Activated CD4-positive, alpha-beta T cell treated with anti-CD3 and anti-CD28 coated beads, Interleukin-2, amount 10 ng/mL, durations not matched to agents 24 days and 14 days (primary cell): ENCODE measurements at regions of chr3 and their contacts with region 1.

Region 1: DNA sequence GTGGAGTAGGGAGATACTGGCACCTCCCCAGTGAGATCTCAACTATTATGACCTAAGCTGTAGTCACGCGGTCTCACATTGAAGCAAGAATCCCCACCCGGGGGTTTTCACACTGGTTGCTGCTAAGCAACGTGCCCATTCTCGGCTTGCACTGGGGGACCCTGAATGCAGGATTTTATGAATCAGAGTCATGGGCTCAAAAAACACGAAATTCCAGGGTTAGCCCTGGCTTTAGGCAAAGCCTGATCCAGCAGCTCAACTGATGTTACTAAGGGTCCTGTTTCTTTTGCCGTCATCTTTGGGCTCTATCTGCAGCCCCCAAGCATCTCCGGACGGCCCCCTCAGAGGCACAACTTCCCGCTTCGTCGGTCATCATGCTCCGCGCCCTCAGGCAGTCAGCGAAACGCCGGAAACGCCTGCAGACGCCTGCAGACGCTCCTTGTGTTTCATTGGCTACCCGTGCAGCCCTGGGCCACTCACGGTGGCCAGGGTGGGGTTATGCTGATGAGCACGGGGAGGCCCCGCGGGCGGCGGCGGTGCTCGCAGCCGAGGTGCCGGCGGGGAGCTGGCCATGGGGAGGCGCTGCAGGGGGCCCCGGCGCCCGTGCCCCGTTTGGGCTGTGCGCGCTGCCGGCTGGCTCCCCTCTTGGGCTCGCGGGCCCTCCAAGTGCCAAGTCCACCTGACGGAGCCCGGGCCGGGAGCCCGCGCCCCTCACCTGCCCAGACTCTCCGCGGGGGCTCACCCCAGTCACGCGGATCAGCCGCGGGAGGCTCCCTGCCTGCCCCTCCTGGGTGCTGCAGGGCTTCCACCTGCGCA is 25.8 kb downstream of the EFCC1 start:
- DNase-seq: peak; percentile 98
- H3K4me3 Mint-ChIP-seq: peak overlapping the region; percentile 84
- H3K27ac Mint-ChIP-seq: peak overlapping the region; percentile 92
- H3K4me1 Mint-ChIP-seq: peaks cover 11% of the 10 kb centered on the region
- H3K27me3 Mint-ChIP-seq: peaks cover 9% of the 10 kb centered on the region

Region 2: GRCh38 chr3:128993461-128994173 is 33.3 kb before region 1 on chr3 and contains the start of gene CFAP92:
- intact Hi-C with region 1: loop called (anchors 1 kb)
- DNase-seq: peak; percentile 98
- H3K4me3 Mint-ChIP-seq: peak within 1 kb of the TSS; percentile 74
- H3K27ac Mint-ChIP-seq: no peak within 1 kb of the TSS
- H3K4me1 Mint-ChIP-seq: peaks cover 30% of the 10 kb centered on the region
- H3K27me3 Mint-ChIP-seq: peaks cover 10% of the 10 kb centered on the region
- total RNA-seq, gene CFAP92: 0.17 TPM in 1 of 2 replicates, not detected in the other

Region 3: DNA sequence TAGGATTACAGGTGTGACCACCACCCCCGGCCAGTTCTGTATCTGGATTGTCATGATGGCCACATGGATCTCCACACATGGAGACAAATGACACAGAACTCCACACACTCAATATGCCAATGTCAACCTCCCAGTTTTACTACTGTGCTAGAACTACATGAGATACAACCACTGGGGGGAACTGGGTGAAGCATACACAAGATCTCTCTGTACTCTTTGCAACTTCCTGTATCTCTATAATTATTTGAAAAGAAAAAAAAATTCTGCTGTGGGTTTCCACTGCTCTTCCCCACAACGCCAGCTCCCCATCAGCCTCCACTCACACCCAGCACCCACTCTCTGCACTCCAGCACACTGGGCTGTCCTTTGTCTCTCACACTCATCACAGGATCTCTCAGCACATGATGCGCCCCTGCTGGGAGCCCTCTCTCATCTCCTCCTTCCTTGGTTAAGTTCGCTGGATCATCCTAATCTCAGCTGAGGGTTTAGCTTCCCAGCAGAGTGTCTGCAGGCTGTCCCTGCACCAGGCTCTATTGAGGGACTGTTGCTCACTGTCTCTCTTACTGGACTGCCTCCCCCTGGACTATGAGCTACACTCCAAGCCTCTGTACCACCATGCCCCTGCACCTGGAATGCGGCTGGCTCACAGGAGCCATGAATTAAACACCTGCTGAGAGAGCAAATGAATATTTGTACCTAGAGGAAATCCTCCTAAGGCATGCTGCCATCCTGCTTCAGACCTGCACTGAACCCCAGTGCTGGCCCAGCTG is 105.3 kb after region 1 on chr3:
- intact Hi-C with region 1: no loop called
- DNase-seq: no peak
- H3K4me3 Mint-ChIP-seq: no peak overlapping the region
- H3K27ac Mint-ChIP-seq: peak overlapping the region; percentile 22
- H3K4me1 Mint-ChIP-seq: peaks cover 4% of the 10 kb centered on the region
- H3K27me3 Mint-ChIP-seq: no peaks in the 10 kb centered on the region